Endothelial cell of umbilical vein (primary cell): ENCODE measurements at regions of chr2 and their contacts with region 1.

Region 1: DNA sequence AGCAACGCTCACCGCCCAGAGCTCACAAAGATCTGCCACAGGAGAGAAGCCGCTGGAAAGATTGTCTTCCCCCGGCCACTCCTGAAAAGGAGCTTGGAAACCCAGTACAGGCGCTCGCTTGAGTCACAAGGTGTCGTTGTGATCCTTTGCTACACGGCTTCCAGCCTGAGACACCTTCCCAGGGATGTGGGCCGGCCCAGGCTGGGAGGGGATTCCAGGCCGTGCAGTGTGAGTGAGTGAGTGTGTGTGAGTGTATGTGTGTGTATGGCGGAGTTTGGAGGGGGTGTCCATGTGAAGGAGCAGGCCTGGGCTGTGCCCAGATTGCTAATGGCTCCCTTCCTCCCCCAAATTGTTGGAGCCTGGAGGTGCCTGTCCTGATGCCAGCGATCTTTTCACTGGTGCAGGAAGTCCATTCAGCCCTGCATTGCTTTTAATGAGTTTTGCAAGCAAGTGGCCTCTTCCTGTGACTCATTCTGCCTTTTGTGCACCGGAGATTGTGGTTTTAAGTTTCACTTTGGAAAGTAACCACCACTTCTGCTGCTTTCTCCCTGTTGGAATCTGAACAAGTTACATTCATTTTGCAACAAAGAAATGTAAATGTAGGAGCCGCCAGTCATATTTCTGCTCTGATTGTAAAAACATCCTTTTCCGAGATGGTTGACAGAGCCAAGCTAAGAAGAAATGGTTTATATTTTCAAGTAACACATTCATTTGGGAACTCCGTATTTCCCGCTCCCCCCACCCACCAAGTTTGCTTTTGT is 83.7 kb downstream of the LPIN1 start:
- DNase-seq: peak; percentile 96
- H3K4me3 ChIP-seq: peak overlapping the region; percentile 13 to 47 (median 17)
- H3K27ac ChIP-seq: peak overlapping the region; percentile 73
- H3K4me1 ChIP-seq: peaks cover 30% of the 10 kb centered on the region
- H3K27me3 ChIP-seq: no peaks in the 10 kb centered on the region
- CTCF ChIP-seq: peak; percentile 27 to 43
- POLR2A ChIP-seq: no peak

Region 2: DNA sequence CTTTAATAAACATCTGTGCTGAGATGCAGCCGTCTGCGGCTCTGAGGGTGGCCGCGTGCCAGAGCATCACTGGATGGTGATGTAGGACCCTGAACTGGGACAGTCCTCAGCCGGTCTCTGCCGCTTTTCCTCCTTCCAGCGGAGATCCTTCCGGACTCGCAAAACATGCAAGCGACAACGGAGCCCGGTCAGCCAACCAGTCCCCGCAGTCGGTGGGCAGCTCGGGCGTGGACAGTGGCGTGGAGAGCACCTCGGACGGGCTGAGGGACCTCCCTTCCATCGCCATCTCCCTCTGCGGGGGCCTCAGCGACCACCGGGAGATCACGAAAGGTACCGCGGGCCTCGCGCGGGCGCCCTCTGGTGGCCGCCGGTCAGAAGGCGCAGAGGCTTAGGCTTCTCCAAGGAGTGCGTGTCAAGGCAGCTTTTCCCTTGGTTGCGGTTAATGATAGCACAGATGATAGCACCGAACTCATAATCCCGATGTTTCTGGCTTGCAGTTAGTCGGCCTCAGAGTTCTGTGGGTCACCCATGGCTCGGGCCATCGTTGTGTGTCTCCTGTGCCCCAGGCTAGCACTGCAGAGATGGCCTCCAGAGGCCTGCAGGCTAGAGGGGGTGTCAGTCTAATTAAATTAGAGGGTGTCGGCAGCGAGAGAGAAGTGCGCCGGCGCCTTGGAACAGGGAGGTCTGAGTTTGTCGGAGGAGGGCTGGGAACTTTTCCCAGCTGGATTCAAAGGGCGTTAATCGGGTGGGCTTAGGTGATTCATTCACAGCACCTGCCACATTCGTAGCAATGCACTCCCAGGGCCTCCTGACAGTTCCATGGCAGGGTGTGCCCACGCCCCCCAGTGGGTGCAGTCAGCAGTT is 45.1 kb before region 1 on chr2:
- CTCF ChIA-PET with region 1: no interaction called
- POLR2A ChIA-PET with region 1: no interaction called
- dilution Hi-C with region 1: no loop called
- intact Hi-C with region 1: no loop called
- DNase-seq: peak; percentile 49
- H3K4me3 ChIP-seq: peak overlapping the region in 1 of 3 experiments; percentile 26
- H3K27ac ChIP-seq: no peak overlapping the region
- H3K4me1 ChIP-seq: no peaks in the 10 kb centered on the region
- H3K27me3 ChIP-seq: no peaks in the 10 kb centered on the region
- CTCF ChIP-seq: peak; percentile 94 to 99
- POLR2A ChIP-seq: no peak

Region 3: GRCh38 chr2:11855064-11855760 is 25.1 kb after region 1 on chr2:
- CTCF ChIA-PET with region 1: no interaction called
- POLR2A ChIA-PET with region 1: no interaction called
- dilution Hi-C with region 1: no loop called
- intact Hi-C with region 1: no loop called
- DNase-seq: no peak
- H3K4me3 ChIP-seq: no peak overlapping the region
- H3K27ac ChIP-seq: no peak overlapping the region
- H3K4me1 ChIP-seq: no peaks in the 10 kb centered on the region
- H3K27me3 ChIP-seq: peaks cover 4 to 10% of the 10 kb centered on the region in 2 experiments
- CTCF ChIP-seq: no peak
- POLR2A ChIP-seq: no peak

Region 4: GRCh38 chr2:11904029-11904428 is 73.9 kb after region 1 on chr2:
- CTCF ChIA-PET with region 1: no interaction called
- POLR2A ChIA-PET with region 1: no interaction called
- dilution Hi-C with region 1: no loop called
- intact Hi-C with region 1: no loop called
- DNase-seq: no peak
- H3K4me3 ChIP-seq: no peak overlapping the region
- H3K27ac ChIP-seq: no peak overlapping the region
- H3K4me1 ChIP-seq: no peaks in the 10 kb centered on the region
- H3K27me3 ChIP-seq: no peaks in the 10 kb centered on the region
- CTCF ChIP-seq: no peak
- POLR2A ChIP-seq: no peak

Region 5: DNA sequence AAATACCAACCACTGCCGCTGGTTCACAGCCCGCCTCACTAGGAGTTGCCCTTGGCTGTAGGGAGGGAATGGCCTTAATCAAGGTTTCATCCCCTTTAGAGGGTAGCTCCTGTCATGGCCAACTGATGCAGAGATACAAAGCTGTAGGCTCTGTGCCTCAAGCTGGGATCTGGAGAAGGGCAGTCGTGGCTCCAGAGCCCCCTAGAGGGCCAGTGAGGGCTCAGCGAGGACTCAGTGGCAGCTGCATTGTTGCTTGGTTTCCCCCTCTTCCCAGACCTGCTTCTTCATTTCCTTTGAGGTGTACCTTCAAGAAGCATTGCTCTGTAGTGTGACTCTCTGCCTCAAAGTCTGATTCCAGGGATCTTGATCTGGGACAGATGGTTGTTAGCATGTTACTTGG is 218.4 kb after region 1 on chr2:
- CTCF ChIA-PET with region 1: interaction called, 4 read pairs
- POLR2A ChIA-PET with region 1: interaction called, 6 read pairs
- dilution Hi-C with region 1: no loop called
- intact Hi-C with region 1: loop called (anchors 1 kb)
- DNase-seq: peak; percentile 4
- H3K4me3 ChIP-seq: no peak overlapping the region
- H3K27ac ChIP-seq: no peak overlapping the region
- H3K4me1 ChIP-seq: no peaks in the 10 kb centered on the region
- H3K27me3 ChIP-seq: no peaks in the 10 kb centered on the region
- CTCF ChIP-seq: peak; percentile 29 to 59
- POLR2A ChIP-seq: no peak

Region 6: GRCh38 chr2:12169721-12170120 is 339.6 kb after region 1 on chr2:
- CTCF ChIA-PET with region 1: interaction called, 3 read pairs
- POLR2A ChIA-PET with region 1: no interaction called
- dilution Hi-C with region 1: no loop called
- intact Hi-C with region 1: loop called (anchors 1 kb)
- DNase-seq: peak; percentile 76
- H3K4me3 ChIP-seq: no peak overlapping the region
- H3K27ac ChIP-seq: peak overlapping the region; percentile 24
- H3K4me1 ChIP-seq: peaks cover 19% of the 10 kb centered on the region
- H3K27me3 ChIP-seq: no peaks in the 10 kb centered on the region
- CTCF ChIP-seq: no peak
- POLR2A ChIP-seq: no peak

Region 7: DNA sequence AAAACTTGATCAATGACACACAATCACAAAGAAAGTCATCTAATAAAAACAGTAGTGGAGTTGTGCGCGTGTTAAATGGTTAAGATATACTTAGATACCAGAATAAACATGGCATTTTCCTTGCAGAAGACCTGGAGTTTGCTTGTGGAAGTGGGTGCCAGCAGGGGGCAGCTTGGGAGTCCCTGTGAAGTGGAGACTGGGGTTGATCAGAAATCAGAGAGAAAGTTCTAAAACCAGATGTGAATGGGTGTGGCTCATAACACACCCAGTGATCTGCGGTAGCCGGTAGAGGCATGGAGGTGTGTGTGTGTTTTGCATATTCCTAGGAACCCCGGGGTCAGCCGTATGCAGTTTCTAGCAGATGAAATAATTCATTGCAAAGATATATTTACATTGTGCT is 586.5 kb after region 1 on chr2:
- CTCF ChIA-PET with region 1: no interaction called
- POLR2A ChIA-PET with region 1: no interaction called
- dilution Hi-C with region 1: no loop called
- intact Hi-C with region 1: loop called (anchors 5 kb)
- DNase-seq: peak; percentile 57
- H3K4me3 ChIP-seq: no peak overlapping the region
- H3K27ac ChIP-seq: no peak overlapping the region
- H3K4me1 ChIP-seq: peaks cover 3% of the 10 kb centered on the region
- H3K27me3 ChIP-seq: no peaks in the 10 kb centered on the region
- CTCF ChIP-seq: peak; percentile 47 to 62
- POLR2A ChIP-seq: no peak

Region 8: GRCh38 chr2:12675352-12675795 is 845.2 kb after region 1 on chr2:
- CTCF ChIA-PET with region 1: interaction called, 3 read pairs
- POLR2A ChIA-PET with region 1: no interaction called
- dilution Hi-C with region 1: no loop called
- intact Hi-C with region 1: loop called (anchors 1 kb)
- DNase-seq: peak; percentile 69
- H3K4me3 ChIP-seq: no peak overlapping the region
- H3K27ac ChIP-seq: peak overlapping the region; percentile 81
- H3K4me1 ChIP-seq: peaks cover 33% of the 10 kb centered on the region
- H3K27me3 ChIP-seq: no peaks in the 10 kb centered on the region
- CTCF ChIP-seq: no peak
- POLR2A ChIP-seq: no peak

Region 9: DNA sequence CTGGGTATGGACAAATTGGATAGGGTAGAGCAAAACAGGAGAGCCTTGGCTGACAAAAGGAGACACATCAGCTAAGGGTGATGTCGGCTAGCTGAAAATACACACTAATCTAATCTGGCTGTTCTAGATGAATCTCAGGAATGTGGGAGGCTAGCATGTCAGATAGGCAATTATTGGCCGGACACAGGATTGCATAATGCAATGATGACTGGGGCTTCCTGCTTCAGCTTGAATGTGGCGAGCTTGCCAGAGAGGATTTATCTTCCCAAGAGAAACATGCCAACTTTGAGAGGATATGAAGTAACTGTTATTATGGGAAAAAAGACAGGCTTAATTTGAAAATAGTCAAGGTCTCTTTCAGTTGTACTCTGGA is 989.0 kb after region 1 on chr2:
- CTCF ChIA-PET with region 1: no interaction called
- POLR2A ChIA-PET with region 1: no interaction called
- dilution Hi-C with region 1: no loop called
- intact Hi-C with region 1: loop called (anchors 2 kb)
- DNase-seq: peak; percentile 97
- H3K4me3 ChIP-seq: peak overlapping the region in 1 of 3 experiments; percentile 41
- H3K27ac ChIP-seq: peak overlapping the region; percentile 96
- H3K4me1 ChIP-seq: peaks cover 32% of the 10 kb centered on the region
- H3K27me3 ChIP-seq: no peaks in the 10 kb centered on the region
- CTCF ChIP-seq: no peak
- POLR2A ChIP-seq: peak; percentile 52